ENCODE measurements at regions of chr1 and their contacts with region 1.

Region 1: GRCh38 chr1:27671964-27672749 is at the start of gene IFI6:
- DNase-seq: peak; percentile 89
- ATAC-seq: peak; percentile 95
- H3K4me3 Mint-ChIP-seq: peak within 1 kb of the TSS; percentile 97
- H3K27ac Mint-ChIP-seq: peak within 1 kb of the TSS; percentile 96
- H3K4me1 Mint-ChIP-seq: peaks cover 45% of the 10 kb centered on the region
- H3K27me3 Mint-ChIP-seq: no peaks in the 10 kb centered on the region
- total RNA-seq, gene IFI6: 271 to 272 TPM

Region 2: DNA sequence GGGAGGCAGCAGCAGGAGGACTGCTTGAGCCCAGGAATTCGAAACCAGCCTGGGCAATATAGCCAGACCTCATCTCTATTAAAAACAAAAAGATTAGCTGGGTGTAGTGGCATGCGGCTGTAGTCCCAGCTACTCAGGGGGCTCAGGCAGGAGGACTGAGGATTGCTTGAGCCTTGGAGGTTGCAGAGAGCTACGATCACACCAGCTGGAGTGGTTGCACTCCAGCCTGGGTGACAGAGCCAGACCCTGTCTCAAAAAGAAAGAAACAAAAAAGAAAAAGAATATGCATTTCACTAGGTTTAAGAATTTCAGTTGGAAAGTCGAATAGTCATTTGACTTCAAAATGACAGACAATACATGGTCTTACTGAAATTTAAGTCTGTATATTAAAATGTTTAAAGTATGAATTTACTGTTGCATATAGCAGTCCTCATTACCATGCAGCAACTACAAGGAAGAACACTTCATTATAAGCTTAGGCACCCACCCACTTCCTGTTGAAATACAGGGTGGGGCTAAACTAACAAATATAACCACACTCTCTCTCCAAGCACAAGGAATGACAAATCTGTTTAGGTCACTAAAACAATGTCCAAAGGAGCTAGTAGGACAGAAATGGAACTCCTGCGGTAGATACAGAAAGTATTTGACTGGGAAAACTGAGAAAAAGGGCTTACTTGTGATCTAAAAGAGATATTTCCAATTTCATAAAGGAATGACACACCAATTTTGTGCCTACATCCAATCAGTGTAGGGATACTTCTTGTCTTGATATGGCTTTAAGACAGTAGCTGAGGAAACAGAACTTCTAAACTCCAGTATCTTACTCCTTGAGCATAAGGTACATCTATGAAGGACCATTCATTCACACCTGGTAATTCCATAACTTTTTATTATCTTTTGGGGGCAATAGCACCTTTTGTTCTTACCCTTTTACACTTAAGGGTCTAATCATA is 235.7 kb before region 1 on chr1:
- CTCF ChIA-PET with region 1: interaction called, 10 read pairs
- POLR2A ChIA-PET with region 1: no interaction called
- DNase-seq: peak; percentile 35
- ATAC-seq: peak; percentile 85
- H3K4me3 Mint-ChIP-seq: peak overlapping the region; percentile 49
- H3K27ac Mint-ChIP-seq: peak overlapping the region; percentile 62
- H3K4me1 Mint-ChIP-seq: peaks cover 55% of the 10 kb centered on the region
- H3K27me3 Mint-ChIP-seq: no peaks in the 10 kb centered on the region

Region 3: DNA sequence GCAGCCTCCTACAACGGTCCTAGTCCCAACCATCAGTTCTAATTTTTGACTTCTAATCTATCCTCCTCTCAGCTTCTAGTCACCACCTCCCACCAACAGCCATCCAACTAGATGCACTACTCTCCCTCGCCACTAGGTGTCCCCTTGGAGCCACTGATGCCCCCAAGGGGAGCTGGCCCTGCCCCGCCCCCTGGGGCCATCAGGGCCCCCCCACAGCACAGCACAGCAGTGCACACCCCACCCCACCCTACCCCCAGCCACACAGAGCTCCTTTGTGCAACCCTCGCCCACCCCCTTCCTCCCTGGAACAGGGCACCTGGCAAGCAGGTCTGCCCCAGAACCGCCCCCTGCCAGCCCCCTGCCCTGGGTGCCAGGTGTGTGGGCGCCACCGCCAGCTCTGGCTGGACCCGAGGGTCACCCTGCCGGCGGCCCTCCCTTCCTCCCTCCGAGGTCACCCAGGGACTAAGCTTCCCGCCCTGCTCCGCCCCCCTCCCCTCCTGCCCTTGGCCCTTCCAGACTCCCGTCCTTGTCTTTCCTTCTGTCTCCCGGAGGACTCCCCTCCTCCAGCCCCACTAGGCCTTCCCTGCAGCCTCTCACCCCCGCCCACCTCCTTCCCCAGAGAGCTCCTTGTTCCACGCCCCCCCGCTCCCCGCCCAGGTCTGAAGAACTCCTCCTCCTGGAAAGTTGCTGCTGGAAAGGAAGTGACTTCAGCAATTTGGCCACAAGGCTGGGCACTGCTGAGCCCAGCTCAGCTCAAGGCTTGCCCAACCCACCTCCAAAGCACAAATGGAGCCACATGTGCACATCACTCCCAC is 115.2 kb before region 1 on chr1:
- CTCF ChIA-PET with region 1: interaction called, 19 read pairs
- POLR2A ChIA-PET with region 1: interaction called, 3 read pairs
- DNase-seq: peak; percentile 84
- ATAC-seq: peak; percentile 74
- H3K4me3 Mint-ChIP-seq: peak overlapping the region; percentile 3
- H3K27ac Mint-ChIP-seq: peak overlapping the region; percentile 84
- H3K4me1 Mint-ChIP-seq: peaks cover 33% of the 10 kb centered on the region
- H3K27me3 Mint-ChIP-seq: no peaks in the 10 kb centered on the region

Region 4: GRCh38 chr1:27616441-27616840 is 55.7 kb before region 1 on chr1:
- CTCF ChIA-PET with region 1: interaction called, 23 read pairs
- POLR2A ChIA-PET with region 1: no interaction called
- DNase-seq: no peak
- ATAC-seq: no peak
- H3K4me3 Mint-ChIP-seq: no peak overlapping the region
- H3K27ac Mint-ChIP-seq: no peak overlapping the region
- H3K4me1 Mint-ChIP-seq: peaks cover 49% of the 10 kb centered on the region
- H3K27me3 Mint-ChIP-seq: peaks cover 5% of the 10 kb centered on the region

Region 5: DNA sequence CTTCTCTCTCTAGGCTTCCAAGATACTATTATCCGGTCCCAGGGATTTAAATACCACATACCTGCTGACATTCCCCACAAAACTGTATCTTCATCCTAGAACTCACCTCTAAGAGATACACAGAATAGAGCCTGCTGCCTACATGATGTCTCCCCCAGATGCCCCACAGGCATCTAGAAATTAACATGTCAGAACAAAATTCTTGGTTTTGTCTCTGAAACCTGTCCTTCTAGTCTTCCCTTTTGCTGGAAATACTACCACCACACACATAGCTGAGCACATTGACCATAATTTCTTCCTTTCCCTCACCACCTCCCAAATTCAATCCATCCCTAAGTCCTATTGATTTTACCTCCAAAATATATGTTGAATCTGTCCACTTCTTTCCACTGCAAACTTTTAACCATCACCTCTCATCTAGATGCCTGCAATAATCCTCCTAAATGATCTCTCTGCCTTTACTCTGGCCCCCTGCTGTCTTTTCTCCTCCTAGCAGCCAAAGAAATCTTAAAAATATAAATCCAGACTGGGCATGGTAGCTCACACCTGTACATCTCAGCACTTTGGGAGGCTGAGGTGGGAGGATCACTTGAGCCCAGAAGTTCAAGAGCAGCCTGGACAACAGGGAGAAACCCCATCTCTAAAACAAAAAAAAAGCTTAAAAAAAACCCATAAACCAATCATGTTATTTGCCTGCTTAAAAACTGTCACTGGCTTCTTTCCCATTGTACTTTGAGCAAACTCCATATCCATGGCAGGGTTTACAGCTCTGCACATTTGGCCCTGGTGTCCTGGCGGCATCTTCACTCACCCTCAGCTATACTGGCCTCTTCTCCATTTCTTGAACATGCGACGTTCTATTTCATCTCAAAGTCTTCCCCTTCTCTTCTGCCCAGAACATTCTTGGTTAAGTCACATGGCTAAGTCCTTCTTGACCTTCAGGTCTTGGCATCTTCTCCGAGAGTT is 47.4 kb after region 1 on chr1:
- CTCF ChIA-PET with region 1: interaction called, 14 read pairs
- POLR2A ChIA-PET with region 1: interaction called, 3 read pairs
- DNase-seq: no peak
- ATAC-seq: peak; percentile 44
- H3K4me3 Mint-ChIP-seq: no peak overlapping the region
- H3K27ac Mint-ChIP-seq: no peak overlapping the region
- H3K4me1 Mint-ChIP-seq: peaks cover 1% of the 10 kb centered on the region
- H3K27me3 Mint-ChIP-seq: peaks cover 23% of the 10 kb centered on the region

Region 6: GRCh38 chr1:27725374-27726173 is 53.4 kb after region 1 on chr1 and contains the start of gene FAM76A:
- CTCF ChIA-PET with region 1: interaction called, 37 read pairs
- POLR2A ChIA-PET with region 1: interaction called, 11 read pairs
- DNase-seq: peak; percentile 100
- ATAC-seq: peak; percentile 94
- H3K4me3 Mint-ChIP-seq: peak within 1 kb of the TSS; percentile 86
- H3K27ac Mint-ChIP-seq: peak within 1 kb of the TSS; percentile 93
- H3K4me1 Mint-ChIP-seq: peaks cover 21% of the 10 kb centered on the region
- H3K27me3 Mint-ChIP-seq: no peaks in the 10 kb centered on the region
- total RNA-seq, gene FAM76A: 14.6 to 17.5 TPM

Region 7: DNA sequence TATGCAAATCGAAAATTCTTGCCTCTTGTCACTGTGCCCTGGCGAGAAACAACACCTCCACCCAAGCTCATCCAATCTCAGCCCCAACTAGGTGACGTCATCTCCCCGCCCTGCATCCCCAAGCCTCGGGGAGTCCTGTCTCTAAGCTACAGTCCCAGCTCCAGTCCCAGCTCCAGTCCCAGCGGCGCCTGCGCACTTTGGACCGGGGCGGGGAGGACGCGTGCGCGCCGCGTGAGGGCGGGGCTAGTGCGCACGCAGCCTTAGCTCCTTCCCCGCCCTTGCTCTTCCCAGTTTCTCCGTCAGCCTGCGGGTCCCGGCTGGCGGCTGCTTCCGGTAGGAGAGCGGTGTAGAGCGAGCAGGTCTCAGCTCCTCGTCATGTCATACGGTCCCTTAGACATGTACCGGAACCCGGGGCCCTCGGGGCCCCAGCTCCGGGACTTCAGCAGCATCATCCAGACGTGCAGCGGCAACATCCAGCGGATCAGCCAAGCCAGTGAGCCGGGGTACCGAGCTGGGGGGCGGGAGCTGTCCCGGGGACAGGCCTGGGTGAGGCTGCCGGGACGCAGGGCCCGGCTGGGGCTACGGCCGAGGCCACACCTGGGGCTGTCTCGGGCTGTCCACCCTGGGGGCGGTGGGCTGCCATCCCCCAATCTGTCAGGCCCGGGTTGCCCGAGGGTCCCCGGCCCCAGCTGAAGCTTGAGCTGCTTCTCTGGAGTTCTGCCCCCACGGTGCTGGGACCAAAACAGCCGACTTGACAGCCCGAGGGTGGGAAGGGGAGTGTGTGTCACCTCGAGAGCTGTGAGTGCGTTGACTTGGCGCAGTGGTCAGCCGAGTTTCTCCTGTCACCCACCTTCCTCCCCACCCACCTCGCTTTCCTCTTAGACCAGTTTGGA is 101.0 kb after region 1 on chr1 and contains the start of gene STX12:
- CTCF ChIA-PET with region 1: interaction called, 30 read pairs
- POLR2A ChIA-PET with region 1: interaction called, 6 read pairs
- DNase-seq: peak; percentile 100
- ATAC-seq: peak; percentile 99
- H3K4me3 Mint-ChIP-seq: peak within 1 kb of the TSS; percentile 96
- H3K27ac Mint-ChIP-seq: peak within 1 kb of the TSS; percentile 97
- H3K4me1 Mint-ChIP-seq: peaks cover 30% of the 10 kb centered on the region
- H3K27me3 Mint-ChIP-seq: no peaks in the 10 kb centered on the region
- total RNA-seq, gene STX12: 21.8 to 23.9 TPM

Region 8: GRCh38 chr1:27959400-27960217 is 287.5 kb after region 1 on chr1 and contains the start of gene XKR8:
- CTCF ChIA-PET with region 1: no interaction called
- POLR2A ChIA-PET with region 1: no interaction called
- DNase-seq: peak; percentile 88
- ATAC-seq: peak; percentile 99
- H3K4me3 Mint-ChIP-seq: peak within 1 kb of the TSS; percentile 80
- H3K27ac Mint-ChIP-seq: peak within 1 kb of the TSS; percentile 81
- H3K4me1 Mint-ChIP-seq: peaks cover 30% of the 10 kb centered on the region
- H3K27me3 Mint-ChIP-seq: peaks cover 6% of the 10 kb centered on the region
- total RNA-seq, gene XKR8: 8.0 TPM

Measured in activated CD8-positive, alpha-beta T cell treated with anti-CD3 and anti-CD28 coated beads, Interleukin-2, amount 10 ng/mL, durations not matched to agents 7 days and 5 days (primary cell).